ENCODE measurements at regions of chr17 and their contacts with region 1.

Region 1: GRCh38 chr17:75289115-75289831 is at the start of gene SLC25A19:
- DNase-seq: peak; percentile 99
- ATAC-seq: peak; percentile 95
- H3K4me3 Mint-ChIP-seq: peak within 1 kb of the TSS; percentile 86
- H3K27ac Mint-ChIP-seq: peak within 1 kb of the TSS; percentile 100
- H3K4me1 Mint-ChIP-seq: peaks cover 28% of the 10 kb centered on the region
- H3K27me3 Mint-ChIP-seq: no peaks in the 10 kb centered on the region
- total RNA-seq, gene SLC25A19: 67.8 to 79.7 TPM

Region 2: GRCh38 chr17:75046582-75047289 is 242.5 kb before region 1 on chr17 and contains the starts of genes ATP5PD and KCTD2:
- CTCF ChIA-PET with region 1: no interaction called
- POLR2A ChIA-PET with region 1: no interaction called
- intact Hi-C with region 1: loop called in 1 of 2 experiments (anchors 1 kb)
- DNase-seq: peak; percentile 97
- ATAC-seq: peak; percentile 95
- H3K4me3 Mint-ChIP-seq: peak within 1 kb of the TSS; percentile 99
- H3K27ac Mint-ChIP-seq: peak within 1 kb of the TSS; percentile 94
- H3K4me1 Mint-ChIP-seq: peaks cover 37% of the 10 kb centered on the region
- H3K27me3 Mint-ChIP-seq: no peaks in the 10 kb centered on the region
- total RNA-seq, gene ATP5PD: 194 to 237 TPM
- total RNA-seq, gene KCTD2: 15.3 to 16.7 TPM

Region 3: GRCh38 chr17:75160211-75160610 is 129.1 kb before region 1 on chr17:
- CTCF ChIA-PET with region 1: no interaction called
- POLR2A ChIA-PET with region 1: no interaction called
- intact Hi-C with region 1: no loop called
- DNase-seq: no peak
- ATAC-seq: no peak
- H3K4me3 Mint-ChIP-seq: no peak overlapping the region
- H3K27ac Mint-ChIP-seq: no peak overlapping the region
- H3K4me1 Mint-ChIP-seq: peaks cover 10% of the 10 kb centered on the region
- H3K27me3 Mint-ChIP-seq: no peaks in the 10 kb centered on the region

Region 4: GRCh38 chr17:75228305-75228704 is 61.0 kb before region 1 on chr17:
- CTCF ChIA-PET with region 1: no interaction called
- POLR2A ChIA-PET with region 1: no interaction called
- intact Hi-C with region 1: no loop called
- DNase-seq: no peak
- ATAC-seq: no peak
- H3K4me3 Mint-ChIP-seq: no peak overlapping the region
- H3K27ac Mint-ChIP-seq: no peak overlapping the region
- H3K4me1 Mint-ChIP-seq: no peaks in the 10 kb centered on the region
- H3K27me3 Mint-ChIP-seq: no peaks in the 10 kb centered on the region

Region 5: DNA sequence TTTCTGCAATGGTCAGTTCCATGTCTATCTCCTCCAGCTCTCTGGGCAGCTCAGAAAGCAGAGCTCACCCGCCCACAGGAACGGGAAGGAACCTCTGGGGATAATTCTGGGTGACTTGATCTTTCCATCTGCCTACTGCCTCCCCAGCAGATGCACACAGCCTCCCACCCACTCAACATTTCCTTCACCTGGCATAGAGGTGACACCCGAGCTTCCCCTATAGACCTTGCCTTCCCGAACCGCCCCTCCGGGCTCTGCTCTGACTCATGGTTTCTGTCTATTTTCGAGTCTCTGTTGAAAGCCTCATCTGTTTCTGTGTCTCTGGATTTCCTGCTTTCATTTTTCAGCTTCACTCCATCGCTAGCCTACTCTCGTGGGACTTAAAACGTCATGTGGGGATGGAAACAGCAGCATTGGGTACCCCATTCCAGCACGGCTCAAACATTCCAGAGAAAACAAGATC is 39.2 kb before region 1 on chr17:
- CTCF ChIA-PET with region 1: interaction called, 6 read pairs
- POLR2A ChIA-PET with region 1: interaction called, 5 read pairs
- intact Hi-C with region 1: loop called in 1 of 2 experiments (anchors 1 kb)
- DNase-seq: peak; percentile 90
- ATAC-seq: peak; percentile 97
- H3K4me3 Mint-ChIP-seq: peak overlapping the region; percentile 64
- H3K27ac Mint-ChIP-seq: peak overlapping the region; percentile 97
- H3K4me1 Mint-ChIP-seq: peaks cover 74% of the 10 kb centered on the region
- H3K27me3 Mint-ChIP-seq: no peaks in the 10 kb centered on the region

Region 6: DNA sequence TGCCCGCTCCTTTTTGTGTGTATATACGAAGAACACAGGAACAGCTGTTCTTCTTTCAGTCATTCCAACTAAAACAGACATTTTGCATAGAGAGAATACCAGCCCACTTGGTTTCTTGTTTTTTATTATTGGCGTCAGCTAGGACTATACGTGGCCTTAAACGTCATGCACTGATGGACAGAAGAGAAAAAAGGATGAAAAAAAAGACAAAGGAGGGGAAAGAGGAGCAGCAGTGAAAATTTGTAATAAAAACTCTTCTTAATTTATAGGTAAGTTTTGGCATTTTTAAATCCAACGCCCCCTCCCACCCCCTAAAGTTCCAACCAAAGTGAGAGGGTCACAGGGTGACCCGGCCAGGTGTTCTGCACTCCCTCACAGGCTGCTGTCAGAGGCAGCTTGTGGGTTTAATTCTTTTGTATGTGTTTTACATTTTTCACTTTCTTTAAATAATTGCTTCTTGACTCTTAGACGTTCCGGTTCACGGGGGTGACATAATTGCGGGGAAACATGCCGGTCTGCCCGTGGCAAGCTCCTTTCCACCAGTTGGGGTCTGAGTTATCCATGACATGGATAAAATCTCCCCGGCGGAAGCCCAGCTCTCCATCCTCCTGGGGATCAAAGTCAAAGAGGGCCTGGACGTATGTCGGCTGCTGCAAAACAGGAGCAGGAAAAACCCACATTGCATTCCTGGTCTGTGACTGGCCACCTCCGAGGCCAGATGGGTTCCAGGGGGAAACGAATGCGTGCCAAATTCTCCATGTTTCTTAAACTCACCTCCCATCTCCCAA is 30.8 kb after region 1 on chr17:
- CTCF ChIA-PET with region 1: interaction called, 9 read pairs
- POLR2A ChIA-PET with region 1: no interaction called
- intact Hi-C with region 1: loop called (anchors 1 to 5 kb)
- DNase-seq: no peak
- ATAC-seq: no peak
- H3K4me3 Mint-ChIP-seq: no peak overlapping the region
- H3K27ac Mint-ChIP-seq: no peak overlapping the region
- H3K4me1 Mint-ChIP-seq: peaks cover 21% of the 10 kb centered on the region
- H3K27me3 Mint-ChIP-seq: no peaks in the 10 kb centered on the region

Region 7: DNA sequence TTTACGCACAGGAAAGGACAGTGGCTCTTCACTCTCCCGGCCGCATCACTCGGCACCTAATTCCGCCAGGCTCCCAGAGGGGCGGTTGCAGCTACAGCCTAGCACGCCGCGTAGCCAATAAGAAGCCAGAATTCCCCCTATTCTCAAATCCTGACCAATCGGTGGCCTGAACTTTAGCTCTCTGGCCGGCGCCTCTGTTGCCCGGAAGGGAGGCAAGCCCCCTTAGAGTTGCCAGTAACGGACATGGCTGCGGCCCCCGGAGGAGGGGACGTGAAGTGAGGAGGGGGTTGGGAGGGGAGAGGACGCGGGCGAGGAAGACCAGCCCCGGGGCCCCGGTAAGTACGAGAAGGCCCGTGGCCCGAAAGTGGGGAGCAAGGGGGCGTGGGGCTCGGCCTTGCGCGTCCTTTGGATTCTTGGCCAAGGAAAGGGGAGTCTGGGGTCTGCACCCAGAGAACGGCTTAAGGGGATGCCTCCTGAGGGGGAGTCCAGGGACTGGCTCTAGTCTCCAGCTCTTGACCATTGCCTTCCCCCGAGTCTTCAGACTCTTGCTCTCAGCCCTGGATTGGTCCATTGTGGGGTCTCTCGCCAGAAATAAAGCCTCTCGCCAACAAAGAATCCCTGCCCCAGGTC is 167.3 kb after region 1 on chr17 and contains the start of gene TMEM94:
- CTCF ChIA-PET with region 1: interaction called, 4 read pairs
- POLR2A ChIA-PET with region 1: interaction called, 4 read pairs
- intact Hi-C with region 1: loop called in 1 of 2 experiments (anchors 1 kb)
- DNase-seq: peak; percentile 95
- ATAC-seq: peak; percentile 99
- H3K4me3 Mint-ChIP-seq: peak within 1 kb of the TSS; percentile 89
- H3K27ac Mint-ChIP-seq: peak within 1 kb of the TSS; percentile 92
- H3K4me1 Mint-ChIP-seq: peaks cover 24% of the 10 kb centered on the region
- H3K27me3 Mint-ChIP-seq: no peaks in the 10 kb centered on the region
- total RNA-seq, gene TMEM94: 51.4 to 62.5 TPM

Region 8: GRCh38 chr17:75779231-75779986 is 490.1 kb after region 1 on chr17:
- CTCF ChIA-PET with region 1: no interaction called
- POLR2A ChIA-PET with region 1: interaction called, 4 read pairs
- intact Hi-C with region 1: loop called in 1 of 2 experiments (anchors 1 kb)
- DNase-seq: peak; percentile 96
- ATAC-seq: peak; percentile 69
- H3K4me3 Mint-ChIP-seq: peak overlapping the region; percentile 98
- H3K27ac Mint-ChIP-seq: peak overlapping the region; percentile 99
- H3K4me1 Mint-ChIP-seq: peaks cover 46% of the 10 kb centered on the region
- H3K27me3 Mint-ChIP-seq: peaks cover 1% of the 10 kb centered on the region

Measured in activated CD4-positive, alpha-beta T cell treated with anti-CD3 and anti-CD28 coated beads for 36 hours (primary cell).